ENCODE measurements at regions of chr6 and their contacts with region 1.

Region 1: DNA sequence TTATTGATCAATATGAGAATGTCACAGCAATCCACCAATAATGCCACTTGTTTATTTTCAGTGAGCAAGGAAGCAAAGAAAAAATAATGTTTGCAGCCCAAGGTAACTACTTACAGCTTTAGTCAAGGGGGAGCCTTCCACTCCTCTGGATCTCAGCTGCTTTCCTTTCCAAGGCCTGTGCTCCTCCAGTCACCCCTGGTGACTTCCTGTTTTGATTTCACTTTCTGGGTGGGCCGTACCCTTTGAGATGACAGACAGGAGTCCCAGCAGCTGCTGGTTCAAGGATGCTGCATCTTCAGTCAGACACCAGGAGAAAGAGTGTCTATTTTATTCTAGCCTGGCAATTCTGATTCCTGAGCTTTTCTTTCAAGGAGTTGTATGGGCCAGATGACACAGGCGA is 5.6 kb upstream of the VNN2 start:
- DNase-seq: peak; percentile 20 to 72 (median 51)
- ATAC-seq: peak; percentile 95 to 99 (median 99)
- H3K4me3 ChIP-seq: peak overlapping the region; percentile 3 to 34
- H3K4me3 Mint-ChIP-seq: peak overlapping the region; percentile 74 to 78 (median 76)
- H3K27ac ChIP-seq: peak overlapping the region; percentile 44
- H3K27ac Mint-ChIP-seq: peak overlapping the region; percentile 83 to 95
- H3K4me1 ChIP-seq: peaks cover 12 to 26% of the 10 kb centered on the region in 2 experiments
- H3K4me1 Mint-ChIP-seq: peaks cover 33 to 44% (median 42%) of the 10 kb centered on the region in 3 donors
- H3K27me3 ChIP-seq: no peaks in the 10 kb centered on the region
- H3K27me3 Mint-ChIP-seq: no peaks in the 10 kb centered on the region

Region 2: DNA sequence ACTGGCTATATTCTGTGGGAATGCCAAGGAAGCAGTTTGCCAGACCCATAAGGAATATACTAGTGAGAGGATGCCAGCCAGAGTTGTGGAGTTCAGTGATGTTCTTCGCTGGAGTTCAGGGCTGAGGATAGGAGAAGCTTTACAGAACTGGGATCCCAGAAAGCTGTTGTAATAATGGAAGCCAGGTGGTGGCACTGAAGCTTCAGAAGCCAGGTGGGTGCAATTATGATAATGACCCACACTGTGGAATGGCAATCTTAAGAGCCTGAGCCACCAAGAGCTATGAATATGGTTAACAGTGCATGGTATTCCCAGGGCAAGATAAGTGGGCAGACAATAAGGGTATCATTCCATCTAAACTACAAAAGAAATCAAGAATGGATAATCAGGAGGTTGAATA is 980.5 kb before region 1 on chr6:
- CTCF ChIA-PET with region 1: no interaction called
- POLR2A ChIA-PET with region 1: no interaction called
- DNase-seq: no peak
- ATAC-seq: no peak
- H3K4me3 ChIP-seq: no peak overlapping the region
- H3K4me3 Mint-ChIP-seq: no peak overlapping the region
- H3K27ac ChIP-seq: no peak overlapping the region
- H3K27ac Mint-ChIP-seq: no peak overlapping the region
- H3K4me1 ChIP-seq: no peaks in the 10 kb centered on the region
- H3K4me1 Mint-ChIP-seq: no peaks in the 10 kb centered on the region
- H3K27me3 ChIP-seq: peaks cover 0 to 7% of the 10 kb centered on the region in 2 experiments
- H3K27me3 Mint-ChIP-seq: peaks cover 9 to 20% of the 10 kb centered on the region in 2 donors

Region 3: GRCh38 chr6:131982740-131983259 is 780.5 kb before region 1 on chr6:
- CTCF ChIA-PET with region 1: interaction called in 1 of 2 experiments, 11 read pairs
- POLR2A ChIA-PET with region 1: no interaction called
- DNase-seq: no peak
- ATAC-seq: no peak
- H3K4me3 ChIP-seq: no peak overlapping the region
- H3K4me3 Mint-ChIP-seq: no peak overlapping the region
- H3K27ac ChIP-seq: no peak overlapping the region
- H3K27ac Mint-ChIP-seq: no peak overlapping the region
- H3K4me1 ChIP-seq: no peaks in the 10 kb centered on the region
- H3K4me1 Mint-ChIP-seq: no peaks in the 10 kb centered on the region
- H3K27me3 ChIP-seq: no peaks in the 10 kb centered on the region
- H3K27me3 Mint-ChIP-seq: peaks cover 0 to 1% of the 10 kb centered on the region in 2 donors

Region 4: GRCh38 chr6:132858750-132859149 is 95.5 kb after region 1 on chr6:
- CTCF ChIA-PET with region 1: no interaction called
- POLR2A ChIA-PET with region 1: no interaction called
- DNase-seq: no peak
- ATAC-seq: no peak
- H3K4me3 ChIP-seq: no peak overlapping the region
- H3K4me3 Mint-ChIP-seq: no peak overlapping the region
- H3K27ac ChIP-seq: no peak overlapping the region
- H3K27ac Mint-ChIP-seq: no peak overlapping the region
- H3K4me1 ChIP-seq: no peaks in the 10 kb centered on the region
- H3K4me1 Mint-ChIP-seq: no peaks in the 10 kb centered on the region
- H3K27me3 ChIP-seq: no peaks in the 10 kb centered on the region
- H3K27me3 Mint-ChIP-seq: no peaks in the 10 kb centered on the region

Region 5: GRCh38 chr6:132931941-132932514 is 168.8 kb after region 1 on chr6:
- CTCF ChIA-PET with region 1: no interaction called
- POLR2A ChIA-PET with region 1: no interaction called
- DNase-seq: no peak
- ATAC-seq: no peak
- H3K4me3 ChIP-seq: no peak overlapping the region
- H3K4me3 Mint-ChIP-seq: no peak overlapping the region
- H3K27ac ChIP-seq: no peak overlapping the region
- H3K27ac Mint-ChIP-seq: no peak overlapping the region
- H3K4me1 ChIP-seq: no peaks in the 10 kb centered on the region
- H3K4me1 Mint-ChIP-seq: no peaks in the 10 kb centered on the region
- H3K27me3 ChIP-seq: peaks cover 3 to 7% of the 10 kb centered on the region in 2 experiments
- H3K27me3 Mint-ChIP-seq: peaks cover 27 to 28% of the 10 kb centered on the region in 2 donors

Region 6: GRCh38 chr6:132961610-132962009 is 198.3 kb after region 1 on chr6:
- CTCF ChIA-PET with region 1: no interaction called
- POLR2A ChIA-PET with region 1: no interaction called
- DNase-seq: peak in 1 of 35 experiments; percentile 2
- ATAC-seq: no peak
- H3K4me3 ChIP-seq: no peak overlapping the region
- H3K4me3 Mint-ChIP-seq: no peak overlapping the region
- H3K27ac ChIP-seq: no peak overlapping the region
- H3K27ac Mint-ChIP-seq: peak overlapping the region in 1 of 2 donors; percentile 26
- H3K4me1 ChIP-seq: no peaks in the 10 kb centered on the region
- H3K4me1 Mint-ChIP-seq: peaks cover 0 to 5% (median 0%) of the 10 kb centered on the region in 3 donors
- H3K27me3 ChIP-seq: no peaks in the 10 kb centered on the region
- H3K27me3 Mint-ChIP-seq: peaks cover 30 to 40% of the 10 kb centered on the region in 2 donors